ENCODE measurements at regions of chr17 and their contacts with region 1.

Region 1: DNA sequence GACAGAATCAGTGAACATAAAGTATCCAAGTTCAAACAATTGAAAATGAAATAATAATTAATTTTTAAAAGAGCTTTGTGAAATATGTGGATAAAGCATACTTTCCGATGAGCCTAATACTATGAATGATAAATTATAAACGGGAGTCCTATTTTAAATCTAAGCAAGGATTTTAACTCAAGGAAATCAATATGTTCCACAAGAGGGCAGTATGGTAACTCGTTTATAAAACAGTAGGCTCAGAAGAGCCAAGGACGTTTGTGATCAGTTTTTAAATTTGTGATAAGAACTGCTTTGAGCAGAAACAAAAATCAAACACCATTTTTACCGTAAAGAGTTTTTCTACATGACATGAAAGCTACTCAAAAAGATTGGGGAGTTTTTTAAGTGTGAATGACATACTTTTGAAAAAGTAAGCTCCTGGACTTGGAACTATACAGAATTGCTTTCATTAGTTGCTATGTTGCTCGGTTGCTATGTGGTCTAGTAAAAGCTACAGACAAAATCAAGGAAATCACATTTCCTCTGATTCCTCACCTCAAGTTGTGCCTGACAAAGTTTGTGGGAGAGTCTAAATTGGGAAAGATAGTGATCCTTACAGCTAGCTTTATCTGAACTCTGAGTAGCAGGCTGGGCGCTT is 11.8 kb upstream of the TEKT1 start:
- DNase-seq: no peak
- ATAC-seq: no peak
- H3K4me3 Mint-ChIP-seq: no peak overlapping the region
- H3K27ac Mint-ChIP-seq: no peak overlapping the region
- H3K4me1 Mint-ChIP-seq: no peaks in the 10 kb centered on the region
- H3K27me3 Mint-ChIP-seq: peaks cover 37% of the 10 kb centered on the region
- CTCF ChIP-seq: peak; percentile 59

Region 2: GRCh38 chr17:6749519-6749918 is 93.8 kb before region 1 on chr17:
- CTCF ChIA-PET with region 1: interaction called, 11 read pairs
- POLR2A ChIA-PET with region 1: no interaction called
- intact Hi-C with region 1: no loop called
- DNase-seq: peak; percentile 24
- ATAC-seq: no peak
- H3K4me3 Mint-ChIP-seq: no peak overlapping the region
- H3K27ac Mint-ChIP-seq: no peak overlapping the region
- H3K4me1 Mint-ChIP-seq: peaks cover 19% of the 10 kb centered on the region
- H3K27me3 Mint-ChIP-seq: peaks cover 7% of the 10 kb centered on the region
- CTCF ChIP-seq: no peak

Region 3: GRCh38 chr17:6853764-6854442 is 10.5 kb after region 1 on chr17:
- CTCF ChIA-PET with region 1: interaction called, 20 read pairs
- POLR2A ChIA-PET with region 1: no interaction called
- intact Hi-C with region 1: no loop called
- DNase-seq: peak; percentile 43
- ATAC-seq: peak; percentile 45
- H3K4me3 Mint-ChIP-seq: peak overlapping the region; percentile 67
- H3K27ac Mint-ChIP-seq: peak overlapping the region; percentile 60
- H3K4me1 Mint-ChIP-seq: peaks cover 8% of the 10 kb centered on the region
- H3K27me3 Mint-ChIP-seq: peaks cover 9% of the 10 kb centered on the region
- CTCF ChIP-seq: peak; percentile 43

Region 4: DNA sequence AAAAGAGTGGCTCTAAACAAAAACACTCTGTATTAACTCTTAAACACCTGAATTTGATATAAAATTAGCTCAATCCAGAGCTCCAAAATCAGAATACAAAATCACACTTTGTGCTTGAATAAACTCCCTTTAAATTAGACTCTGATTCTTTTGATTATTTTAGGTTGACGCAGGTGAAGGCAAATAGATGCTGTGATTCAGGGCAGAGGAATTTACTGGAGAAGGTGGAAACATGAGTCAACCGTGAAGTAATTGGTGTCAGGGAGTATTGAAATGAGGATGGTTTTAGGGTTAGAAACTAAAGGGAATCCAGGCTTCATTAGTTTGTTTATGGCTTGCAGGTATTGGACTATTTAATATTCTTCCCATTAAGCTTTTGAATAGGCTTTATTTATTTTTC is 25.2 kb after region 1 on chr17:
- CTCF ChIA-PET with region 1: interaction called, 18 read pairs
- POLR2A ChIA-PET with region 1: no interaction called
- intact Hi-C with region 1: no loop called
- DNase-seq: no peak
- ATAC-seq: no peak
- H3K4me3 Mint-ChIP-seq: no peak overlapping the region
- H3K27ac Mint-ChIP-seq: no peak overlapping the region
- H3K4me1 Mint-ChIP-seq: no peaks in the 10 kb centered on the region
- H3K27me3 Mint-ChIP-seq: peaks cover 13% of the 10 kb centered on the region
- CTCF ChIP-seq: no peak

Region 5: GRCh38 chr17:6903326-6903900 is 60.1 kb after region 1 on chr17:
- CTCF ChIA-PET with region 1: interaction called, 14 read pairs
- POLR2A ChIA-PET with region 1: no interaction called
- intact Hi-C with region 1: no loop called
- DNase-seq: no peak
- ATAC-seq: no peak
- H3K4me3 Mint-ChIP-seq: no peak overlapping the region
- H3K27ac Mint-ChIP-seq: no peak overlapping the region
- H3K4me1 Mint-ChIP-seq: no peaks in the 10 kb centered on the region
- H3K27me3 Mint-ChIP-seq: no peaks in the 10 kb centered on the region
- CTCF ChIP-seq: no peak

Region 6: GRCh38 chr17:7098802-7099459 is 255.6 kb after region 1 on chr17:
- CTCF ChIA-PET with region 1: no interaction called
- POLR2A ChIA-PET with region 1: no interaction called
- intact Hi-C with region 1: no loop called
- DNase-seq: no peak
- ATAC-seq: no peak
- H3K4me3 Mint-ChIP-seq: no peak overlapping the region
- H3K27ac Mint-ChIP-seq: no peak overlapping the region
- H3K4me1 Mint-ChIP-seq: no peaks in the 10 kb centered on the region
- H3K27me3 Mint-ChIP-seq: peaks cover 7% of the 10 kb centered on the region
- CTCF ChIP-seq: no peak